Activated naive CD4-positive, alpha-beta T cell treated with anti-CD3 and anti-CD28 coated beads for 36 hours (primary cell): ENCODE measurements at regions of chr18 and their contacts with region 1.

Region 1: GRCh38 chr18:54357660-54358494 is at the starts of genes C18orf54 and STARD6:
- DNase-seq: peak; percentile 89
- H3K4me3 Mint-ChIP-seq: peak within 1 kb of the TSS; percentile 100
- H3K27ac Mint-ChIP-seq: peak within 1 kb of the TSS; percentile 95
- H3K4me1 Mint-ChIP-seq: peaks cover 12% of the 10 kb centered on the region
- H3K27me3 Mint-ChIP-seq: peaks cover 5% of the 10 kb centered on the region
- total RNA-seq, gene C18orf54: 10.2 to 11.5 TPM
- total RNA-seq, gene STARD6: not detected

Region 2: GRCh38 chr18:54060343-54061005 is 297.4 kb before region 1 on chr18:
- CTCF ChIA-PET with region 1: no interaction called
- intact Hi-C with region 1: no loop called
- DNase-seq: no peak
- H3K4me3 Mint-ChIP-seq: no peak overlapping the region
- H3K27ac Mint-ChIP-seq: no peak overlapping the region
- H3K4me1 Mint-ChIP-seq: no peaks in the 10 kb centered on the region
- H3K27me3 Mint-ChIP-seq: peaks cover 9% of the 10 kb centered on the region

Region 3: DNA sequence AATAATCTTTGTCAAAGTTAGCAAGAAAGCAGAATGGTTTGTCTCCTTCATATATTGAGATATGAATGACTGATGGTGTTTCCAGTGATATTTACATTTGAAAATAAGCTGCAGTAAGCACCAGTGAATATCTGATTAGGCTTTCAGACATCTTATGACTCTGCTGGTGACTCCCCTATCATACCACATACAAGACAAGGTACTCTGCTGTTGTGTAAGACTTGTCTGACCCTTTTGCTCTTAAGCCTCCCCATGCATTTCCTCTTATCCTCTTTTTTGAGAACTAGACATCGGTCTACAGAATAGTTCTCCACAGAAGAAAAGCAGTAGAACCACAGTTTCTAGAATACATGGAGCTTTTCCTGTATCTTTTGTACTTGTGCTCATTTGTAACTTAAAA is 79.3 kb before region 1 on chr18:
- CTCF ChIA-PET with region 1: no interaction called
- intact Hi-C with region 1: no loop called
- DNase-seq: no peak
- H3K4me3 Mint-ChIP-seq: no peak overlapping the region
- H3K27ac Mint-ChIP-seq: no peak overlapping the region
- H3K4me1 Mint-ChIP-seq: peaks cover 7% of the 10 kb centered on the region
- H3K27me3 Mint-ChIP-seq: no peaks in the 10 kb centered on the region

Region 4: DNA sequence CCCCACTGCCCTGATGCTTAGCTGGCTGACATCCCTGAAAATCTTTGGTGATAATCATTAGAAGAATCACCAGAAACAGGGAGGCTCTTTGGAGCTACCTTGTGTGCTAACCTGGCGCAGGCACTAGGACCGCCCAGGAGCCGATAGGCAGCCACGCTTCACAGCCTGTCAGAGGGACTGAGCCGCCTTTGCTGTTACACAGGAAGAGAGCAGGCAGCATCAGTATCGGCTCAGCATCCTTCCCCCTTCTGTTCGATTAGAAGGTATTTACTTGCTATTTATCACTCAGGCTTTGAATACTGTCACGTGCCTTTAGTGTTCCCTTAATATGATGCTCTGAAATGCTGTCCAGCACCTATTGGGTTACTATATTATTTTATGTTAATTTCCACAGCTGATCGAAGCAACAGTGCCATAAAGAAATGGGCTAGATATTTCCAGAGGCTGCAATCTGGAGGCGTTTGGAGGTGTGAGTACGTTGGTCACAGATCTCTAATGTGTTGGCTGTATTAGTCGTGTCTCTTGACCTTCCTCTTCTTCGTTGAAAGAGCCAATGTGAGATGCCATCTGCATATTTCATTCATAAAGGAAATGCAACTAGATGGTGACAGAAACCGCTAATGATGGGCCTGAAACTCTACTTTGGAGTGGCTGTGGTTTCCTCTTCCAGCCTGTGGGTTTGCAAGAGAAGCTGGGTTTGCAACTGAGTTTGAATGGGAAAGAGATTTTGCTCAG is 360.0 kb after region 1 on chr18:
- CTCF ChIA-PET with region 1: no interaction called
- intact Hi-C with region 1: no loop called
- DNase-seq: peak; percentile 69
- H3K4me3 Mint-ChIP-seq: peak overlapping the region; percentile 60
- H3K27ac Mint-ChIP-seq: no peak overlapping the region
- H3K4me1 Mint-ChIP-seq: peaks cover 33% of the 10 kb centered on the region
- H3K27me3 Mint-ChIP-seq: peaks cover 12% of the 10 kb centered on the region

Region 5: DNA sequence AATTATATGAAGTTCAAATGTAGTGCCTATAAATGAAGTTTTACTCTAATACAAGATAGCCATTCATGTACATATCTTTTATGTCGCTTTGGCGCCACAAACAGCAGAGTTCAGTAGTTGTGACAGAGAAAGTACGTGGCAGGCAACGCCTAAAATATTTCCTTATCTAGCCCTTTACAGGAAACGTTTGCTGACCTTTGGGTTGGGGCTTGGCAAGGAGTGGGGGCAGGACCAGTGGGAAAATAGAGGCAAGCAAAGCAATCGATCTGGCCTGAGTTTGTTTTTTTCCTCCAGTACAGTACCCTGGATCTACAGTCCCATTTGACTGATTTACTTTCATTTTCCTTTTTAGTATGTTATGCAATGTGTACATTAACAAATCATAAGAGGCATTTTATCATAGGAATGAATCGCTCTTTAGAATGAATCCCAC is 588.3 kb after region 1 on chr18:
- CTCF ChIA-PET with region 1: no interaction called
- intact Hi-C with region 1: loop called (anchors 1 kb)
- DNase-seq: peak; percentile 28
- H3K4me3 Mint-ChIP-seq: peak overlapping the region; percentile 82
- H3K27ac Mint-ChIP-seq: peak overlapping the region; percentile 73
- H3K4me1 Mint-ChIP-seq: peaks cover 14% of the 10 kb centered on the region
- H3K27me3 Mint-ChIP-seq: no peaks in the 10 kb centered on the region

Region 6: DNA sequence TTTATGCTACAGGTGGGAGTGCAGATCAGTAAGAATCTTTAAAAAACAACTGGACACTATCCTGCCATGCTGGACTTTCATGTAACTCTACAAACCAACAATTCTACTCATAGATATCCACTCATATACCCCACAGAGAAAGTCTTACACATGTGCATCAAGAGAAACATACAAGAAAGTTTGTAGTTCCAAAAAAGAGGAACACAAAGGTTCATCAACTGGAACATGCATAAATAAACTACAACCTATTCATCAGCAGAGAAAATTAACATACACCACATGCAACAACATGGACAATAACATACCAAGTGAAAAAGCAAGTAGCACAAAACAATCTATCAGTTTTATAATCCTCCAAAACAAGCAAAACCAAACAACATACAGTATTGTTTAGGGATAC is 1213.1 kb after region 1 on chr18:
- CTCF ChIA-PET with region 1: no interaction called
- intact Hi-C with region 1: no loop called
- DNase-seq: no peak
- H3K4me3 Mint-ChIP-seq: no peak overlapping the region
- H3K27ac Mint-ChIP-seq: no peak overlapping the region
- H3K4me1 Mint-ChIP-seq: no peaks in the 10 kb centered on the region
- H3K27me3 Mint-ChIP-seq: no peaks in the 10 kb centered on the region